ENCODE measurements at regions of chr5 and their contacts with region 1.

Region 1: DNA sequence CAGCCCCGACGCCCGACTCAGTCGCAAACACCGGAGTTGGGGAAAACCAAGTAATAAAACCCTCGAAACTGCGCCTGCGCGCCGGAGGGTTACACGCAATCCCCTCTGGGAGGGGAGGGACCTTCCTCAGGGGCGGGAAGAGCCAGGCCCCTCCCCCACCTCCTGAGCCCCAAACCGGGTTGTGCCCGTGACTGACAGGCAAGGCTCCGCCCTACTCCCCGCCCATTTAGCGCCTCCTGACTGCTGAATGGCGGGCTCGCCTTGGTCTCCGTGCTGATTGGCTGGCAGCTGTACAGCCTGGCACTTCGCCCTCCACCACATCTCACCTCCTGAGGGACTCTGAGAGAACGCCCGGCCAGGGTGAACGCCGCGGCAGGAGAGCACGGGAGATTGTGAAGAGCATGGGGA is at the start of gene PRDM9:
- DNase-seq: peak; percentile 77
- ATAC-seq: peak; percentile 93
- H3K4me3 Mint-ChIP-seq: peak within 1 kb of the TSS; percentile 70
- H3K27ac Mint-ChIP-seq: peak within 1 kb of the TSS; percentile 69
- H3K4me1 Mint-ChIP-seq: no peaks in the 10 kb centered on the region
- H3K27me3 Mint-ChIP-seq: no peaks in the 10 kb centered on the region
- total RNA-seq, gene PRDM9: not detected

Region 2: GRCh38 chr5:21665525-21665924 is 1841.8 kb before region 1 on chr5:
- CTCF ChIA-PET with region 1: no interaction called
- POLR2A ChIA-PET with region 1: no interaction called
- intact Hi-C with region 1: no loop called
- DNase-seq: no peak
- ATAC-seq: no peak
- H3K4me3 Mint-ChIP-seq: no peak overlapping the region
- H3K27ac Mint-ChIP-seq: no peak overlapping the region
- H3K4me1 Mint-ChIP-seq: no peaks in the 10 kb centered on the region
- H3K27me3 Mint-ChIP-seq: no peaks in the 10 kb centered on the region

Region 3: GRCh38 chr5:22947921-22948320 is 559.4 kb before region 1 on chr5:
- CTCF ChIA-PET with region 1: no interaction called
- POLR2A ChIA-PET with region 1: no interaction called
- intact Hi-C with region 1: no loop called
- DNase-seq: no peak
- ATAC-seq: no peak
- H3K4me3 Mint-ChIP-seq: no peak overlapping the region
- H3K27ac Mint-ChIP-seq: no peak overlapping the region
- H3K4me1 Mint-ChIP-seq: no peaks in the 10 kb centered on the region
- H3K27me3 Mint-ChIP-seq: no peaks in the 10 kb centered on the region

Region 4: DNA sequence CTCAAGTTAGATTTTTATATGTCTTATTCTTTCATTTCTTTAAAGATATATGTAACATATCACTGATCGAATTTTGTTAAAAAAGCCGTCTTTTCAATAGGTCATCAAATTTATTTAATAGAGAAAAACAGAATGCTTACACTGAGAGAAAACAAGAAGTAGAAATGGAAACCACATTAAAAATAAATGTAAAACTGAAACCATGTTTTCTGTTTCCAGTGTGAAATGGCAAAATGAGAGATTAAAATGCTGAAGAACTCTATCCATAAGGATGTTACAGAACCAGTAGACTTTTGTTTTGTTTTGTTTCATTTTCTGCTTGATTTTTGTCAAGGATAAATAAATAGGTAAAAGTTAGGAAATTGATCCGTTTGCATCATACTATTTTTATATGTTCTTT is 210.2 kb after region 1 on chr5:
- CTCF ChIA-PET with region 1: no interaction called
- POLR2A ChIA-PET with region 1: interaction called, 12 read pairs
- intact Hi-C with region 1: no loop called
- DNase-seq: no peak
- ATAC-seq: no peak
- H3K4me3 Mint-ChIP-seq: no peak overlapping the region
- H3K27ac Mint-ChIP-seq: no peak overlapping the region
- H3K4me1 Mint-ChIP-seq: no peaks in the 10 kb centered on the region
- H3K27me3 Mint-ChIP-seq: no peaks in the 10 kb centered on the region